Activated CD8-positive, alpha-beta T cell treated with anti-CD3 and anti-CD28 coated beads for 36 hours (primary cell): ENCODE measurements at regions of chr7 and their contacts with region 1.

Region 1: GRCh38 chr7:142632291-142633134 is 116.8 kb upstream of the PRSS1 start:
- DNase-seq: peak; percentile 65
- ATAC-seq: peak; percentile 76
- H3K4me3 Mint-ChIP-seq: no peak overlapping the region
- H3K27ac Mint-ChIP-seq: peak overlapping the region; percentile 7
- H3K4me1 Mint-ChIP-seq: peaks cover 9% of the 10 kb centered on the region
- H3K27me3 Mint-ChIP-seq: peaks cover 8% of the 10 kb centered on the region
- CTCF ChIP-seq: peak; percentile 59

Region 2: DNA sequence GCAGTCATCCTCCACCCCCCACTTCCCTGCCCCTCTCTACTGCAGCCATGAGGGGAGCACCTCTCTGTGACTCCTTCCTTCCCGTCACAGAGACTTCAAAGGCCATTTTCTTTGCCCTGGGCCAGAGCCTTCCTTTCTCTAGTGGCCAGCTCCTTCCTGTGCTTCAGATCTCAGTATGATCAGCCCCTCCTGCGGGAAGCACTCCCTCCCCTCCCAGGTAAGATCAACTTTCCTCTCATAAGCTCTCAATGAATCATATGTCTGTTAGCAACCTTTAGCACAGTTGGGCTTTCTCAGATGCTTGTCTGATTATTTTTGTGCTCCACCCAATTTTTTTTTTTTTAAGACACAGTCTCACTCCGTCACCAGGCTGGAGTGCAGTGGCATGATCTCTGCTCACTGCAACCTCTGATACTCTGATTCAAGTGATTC is 124.2 kb before region 1 on chr7:
- CTCF ChIA-PET with region 1: no interaction called
- POLR2A ChIA-PET with region 1: no interaction called
- intact Hi-C with region 1: no loop called
- DNase-seq: peak; percentile 21
- ATAC-seq: peak; percentile 69
- H3K4me3 Mint-ChIP-seq: no peak overlapping the region
- H3K27ac Mint-ChIP-seq: peak overlapping the region; percentile 78
- H3K4me1 Mint-ChIP-seq: peaks cover 23% of the 10 kb centered on the region
- H3K27me3 Mint-ChIP-seq: no peaks in the 10 kb centered on the region
- CTCF ChIP-seq: no peak

Region 3: DNA sequence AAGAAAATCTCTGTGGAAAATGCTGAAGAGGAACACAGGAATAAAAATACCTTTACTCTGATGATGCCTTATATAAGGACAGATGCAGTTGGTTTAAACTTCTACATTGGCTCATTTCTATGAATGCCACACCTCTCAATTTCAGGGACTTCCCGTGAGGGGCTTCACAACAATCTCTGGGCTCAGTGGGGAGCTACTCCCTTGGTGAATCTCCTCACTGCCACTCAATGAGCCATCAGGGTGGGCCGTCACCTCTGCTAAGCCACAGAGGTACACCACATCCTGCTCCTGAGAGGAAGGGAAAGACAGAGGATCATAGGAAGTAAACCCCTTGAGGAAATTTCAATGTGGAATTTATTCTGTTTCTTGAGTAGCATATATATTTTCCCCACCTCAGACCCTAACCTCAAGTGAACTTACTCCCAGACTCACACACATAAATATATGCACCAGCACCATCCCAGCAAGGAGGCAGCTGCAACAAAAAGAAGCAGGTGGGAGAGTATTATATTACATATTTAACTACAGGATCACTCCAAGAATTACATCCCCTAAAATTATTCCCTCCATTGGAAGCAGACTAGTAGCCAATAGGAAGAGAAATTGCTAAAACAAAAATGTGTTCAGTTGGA is 53.5 kb after region 1 on chr7:
- CTCF ChIA-PET with region 1: no interaction called
- POLR2A ChIA-PET with region 1: no interaction called
- intact Hi-C with region 1: no loop called
- DNase-seq: peak; percentile 8
- ATAC-seq: peak; percentile 20
- H3K4me3 Mint-ChIP-seq: no peak overlapping the region
- H3K27ac Mint-ChIP-seq: peak overlapping the region; percentile 38
- H3K4me1 Mint-ChIP-seq: peaks cover 24% of the 10 kb centered on the region
- H3K27me3 Mint-ChIP-seq: no peaks in the 10 kb centered on the region
- CTCF ChIP-seq: no peak

Region 4: GRCh38 chr7:142788303-142789289 is 156.1 kb after region 1 on chr7:
- CTCF ChIA-PET with region 1: interaction called, 54 read pairs
- POLR2A ChIA-PET with region 1: interaction called, 16 read pairs
- intact Hi-C with region 1: loop called (anchors 5 kb)
- DNase-seq: peak; percentile 17
- ATAC-seq: no peak
- H3K4me3 Mint-ChIP-seq: peak overlapping the region; percentile 100
- H3K27ac Mint-ChIP-seq: peak overlapping the region; percentile 97
- H3K4me1 Mint-ChIP-seq: peaks cover 16% of the 10 kb centered on the region
- H3K27me3 Mint-ChIP-seq: no peaks in the 10 kb centered on the region
- CTCF ChIP-seq: no peak